Caco-2 (cell line): ENCODE measurements at regions of chr18 and their contacts with region 1.

Region 1: GRCh38 chr18:22282311-22283112 is 113.1 kb downstream of the GATA6 start:
- DNase-seq: peak in 1 of 2 experiments; percentile 30
- H3K4me3 ChIP-seq: no peak overlapping the region
- H3K4me3 Mint-ChIP-seq: peak overlapping the region; percentile 44
- H3K27ac Mint-ChIP-seq: peak overlapping the region; percentile 82
- H3K4me1 ChIP-seq: peaks cover 16% of the 10 kb centered on the region
- H3K4me1 Mint-ChIP-seq: peaks cover 20% of the 10 kb centered on the region
- H3K27me3 ChIP-seq: no peaks in the 10 kb centered on the region
- H3K27me3 Mint-ChIP-seq: no peaks in the 10 kb centered on the region
- CTCF ChIP-seq: no peak

Region 2: GRCh38 chr18:22230471-22230945 is 52.0 kb before region 1 on chr18:
- CTCF ChIA-PET with region 1: no interaction called
- POLR2A ChIA-PET with region 1: no interaction called
- intact Hi-C with region 1: loop called (anchors 5 kb)
- DNase-seq: no peak
- H3K4me3 ChIP-seq: no peak overlapping the region
- H3K4me3 Mint-ChIP-seq: no peak overlapping the region
- H3K27ac Mint-ChIP-seq: no peak overlapping the region
- H3K4me1 ChIP-seq: peaks cover 52% of the 10 kb centered on the region
- H3K4me1 Mint-ChIP-seq: peaks cover 28% of the 10 kb centered on the region
- H3K27me3 ChIP-seq: no peaks in the 10 kb centered on the region
- H3K27me3 Mint-ChIP-seq: no peaks in the 10 kb centered on the region
- CTCF ChIP-seq: no peak

Region 3: GRCh38 chr18:22241921-22242361 is 40.6 kb before region 1 on chr18:
- CTCF ChIA-PET with region 1: no interaction called
- POLR2A ChIA-PET with region 1: no interaction called
- intact Hi-C with region 1: no loop called
- DNase-seq: peak; percentile 89 to 95
- H3K4me3 ChIP-seq: no peak overlapping the region
- H3K4me3 Mint-ChIP-seq: peak overlapping the region; percentile 43
- H3K27ac Mint-ChIP-seq: peak overlapping the region; percentile 74
- H3K4me1 ChIP-seq: peaks cover 55% of the 10 kb centered on the region
- H3K4me1 Mint-ChIP-seq: peaks cover 46% of the 10 kb centered on the region
- H3K27me3 ChIP-seq: no peaks in the 10 kb centered on the region
- H3K27me3 Mint-ChIP-seq: no peaks in the 10 kb centered on the region
- CTCF ChIP-seq: no peak

Region 4: DNA sequence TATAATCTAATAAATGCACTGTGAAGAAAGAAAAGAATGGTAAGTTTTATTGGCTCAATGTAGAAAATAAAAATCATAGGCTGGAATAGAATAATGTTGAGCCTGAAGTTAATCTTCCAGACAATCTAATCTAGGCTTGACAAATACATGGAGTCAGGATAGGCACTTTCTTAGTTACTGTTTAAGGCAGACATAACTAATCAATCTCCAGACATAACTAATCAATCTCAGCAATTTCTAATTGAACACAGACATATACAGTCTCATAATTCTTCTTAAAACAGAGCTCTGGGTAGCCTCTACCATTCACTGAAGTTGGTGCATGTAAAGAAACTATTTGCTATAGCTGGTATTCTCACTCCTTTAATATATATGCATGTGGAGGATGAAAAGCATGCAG is 285.3 kb after region 1 on chr18:
- CTCF ChIA-PET with region 1: no interaction called
- POLR2A ChIA-PET with region 1: no interaction called
- intact Hi-C with region 1: no loop called
- DNase-seq: no peak
- H3K4me3 ChIP-seq: no peak overlapping the region
- H3K4me3 Mint-ChIP-seq: no peak overlapping the region
- H3K27ac Mint-ChIP-seq: no peak overlapping the region
- H3K4me1 ChIP-seq: no peaks in the 10 kb centered on the region
- H3K4me1 Mint-ChIP-seq: no peaks in the 10 kb centered on the region
- H3K27me3 ChIP-seq: no peaks in the 10 kb centered on the region
- H3K27me3 Mint-ChIP-seq: peaks cover 6% of the 10 kb centered on the region
- CTCF ChIP-seq: no peak